A673 (cell line): ENCODE measurements at regions of chr7 and their contacts with region 1.

Region 1: GRCh38 chr7:35424869-35425495 is 171.1 kb upstream of the TBX20 start:
- DNase-seq: peak; percentile 67
- H3K4me3 ChIP-seq: no peak overlapping the region
- H3K27ac ChIP-seq: no peak overlapping the region
- H3K4me1 ChIP-seq: no peaks in the 10 kb centered on the region
- H3K27me3 ChIP-seq: no peaks in the 10 kb centered on the region
- CTCF ChIP-seq: peak; percentile 90

Region 2: DNA sequence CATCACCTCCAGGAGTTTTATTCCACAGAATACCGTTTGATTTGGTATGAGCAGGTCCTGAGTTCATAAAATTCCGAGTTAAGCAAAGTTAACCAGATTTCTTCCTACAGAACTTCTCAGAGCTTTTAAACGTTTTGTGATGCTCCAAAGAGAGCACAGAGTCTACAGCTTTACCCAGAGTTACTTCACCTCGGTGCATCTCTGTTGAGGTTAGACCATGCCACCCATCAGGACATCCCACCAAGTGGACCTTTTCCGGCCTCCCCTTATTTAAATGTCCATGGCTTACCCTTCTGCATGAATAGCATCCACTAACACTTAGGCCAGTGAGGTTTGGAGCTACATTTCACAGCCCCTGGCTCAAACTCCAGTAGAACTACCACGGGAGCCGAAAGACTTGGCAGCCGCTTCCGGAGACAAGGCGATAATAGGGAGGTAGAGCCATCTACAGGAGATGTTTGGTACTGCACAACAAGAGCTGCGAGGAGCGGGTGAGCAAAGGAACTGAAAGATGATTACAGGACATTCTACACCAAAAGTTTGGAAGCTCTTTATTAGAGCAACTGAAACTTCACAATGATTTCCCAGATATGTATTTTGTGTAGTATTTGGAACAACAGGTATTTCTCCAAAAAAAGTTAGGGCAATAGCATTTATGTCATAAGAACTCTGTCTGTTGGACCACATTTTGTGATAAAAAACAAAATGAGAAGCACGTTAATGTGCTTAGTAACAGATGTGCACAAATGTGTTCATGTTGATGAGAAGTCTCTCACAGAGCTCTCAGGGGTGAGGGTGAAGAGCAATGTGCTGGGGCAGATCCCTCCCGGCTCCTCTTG is 95.2 kb after region 1 on chr7:
- CTCF ChIA-PET with region 1: interaction called, 25 read pairs
- POLR2A ChIA-PET with region 1: no interaction called
- intact Hi-C with region 1: loop called (anchors 1 kb)
- DNase-seq: peak; percentile 87
- H3K4me3 ChIP-seq: no peak overlapping the region
- H3K27ac ChIP-seq: no peak overlapping the region
- H3K4me1 ChIP-seq: peaks cover 10% of the 10 kb centered on the region
- H3K27me3 ChIP-seq: no peaks in the 10 kb centered on the region
- CTCF ChIP-seq: peak; percentile 91

Region 3: GRCh38 chr7:35537067-35538023 is 112.4 kb after region 1 on chr7:
- CTCF ChIA-PET with region 1: interaction called, 5 read pairs
- POLR2A ChIA-PET with region 1: no interaction called
- intact Hi-C with region 1: loop called (anchors 1 kb)
- DNase-seq: peak; percentile 85
- H3K4me3 ChIP-seq: peak overlapping the region; percentile 44
- H3K27ac ChIP-seq: no peak overlapping the region
- H3K4me1 ChIP-seq: peaks cover 4% of the 10 kb centered on the region
- H3K27me3 ChIP-seq: no peaks in the 10 kb centered on the region
- CTCF ChIP-seq: peak; percentile 98

Region 4: GRCh38 chr7:35906191-35906908 is 481.4 kb after region 1 on chr7:
- CTCF ChIA-PET with region 1: no interaction called
- POLR2A ChIA-PET with region 1: no interaction called
- intact Hi-C with region 1: loop called (anchors 10 kb)
- DNase-seq: peak; percentile 87
- H3K4me3 ChIP-seq: no peak overlapping the region
- H3K27ac ChIP-seq: no peak overlapping the region
- H3K4me1 ChIP-seq: peaks cover 32% of the 10 kb centered on the region
- H3K27me3 ChIP-seq: no peaks in the 10 kb centered on the region
- CTCF ChIP-seq: peak; percentile 85